ENCODE measurements at regions of chr4 and their contacts with region 1.

Region 1: DNA sequence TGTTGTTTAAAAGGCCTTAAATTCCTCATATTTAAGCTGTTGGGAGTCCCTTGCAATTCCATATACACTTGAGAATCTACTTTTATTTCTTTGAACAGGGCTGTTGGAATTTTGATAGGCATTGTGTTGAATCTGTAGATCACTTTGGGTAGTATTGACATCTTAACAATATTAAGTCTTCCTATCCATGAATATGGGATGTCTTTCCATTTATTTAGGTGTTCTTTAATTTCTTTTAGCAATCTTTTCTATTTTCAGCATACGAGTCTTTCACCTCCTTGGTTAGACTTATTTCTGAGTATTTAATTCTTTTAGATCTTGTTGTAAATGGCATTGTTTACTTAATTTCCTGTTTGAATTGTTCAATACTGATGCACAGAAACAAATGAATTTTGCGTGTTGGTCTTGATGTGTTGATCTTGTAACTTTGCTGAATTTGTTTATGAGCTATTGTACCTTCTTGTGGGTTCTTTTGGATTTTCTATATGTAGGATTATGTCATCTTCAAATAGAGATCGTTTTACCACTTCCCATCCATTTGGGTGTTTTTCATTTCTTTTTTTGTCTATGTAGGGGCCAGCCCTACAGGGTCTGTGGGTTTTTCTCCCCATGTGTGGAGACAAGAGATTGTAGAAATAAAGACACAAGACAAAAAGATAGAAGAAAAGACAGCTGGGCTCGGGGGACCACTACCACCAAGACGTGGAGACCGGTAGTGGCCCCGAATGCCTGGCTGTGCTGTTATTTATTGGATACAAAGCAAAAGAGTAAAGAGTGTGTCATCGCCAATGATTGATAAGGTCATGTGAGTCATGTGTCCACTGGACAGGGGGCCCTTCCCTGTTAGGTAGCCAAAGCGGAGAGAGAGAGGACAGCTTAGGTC is 18.2 kb upstream of the CTBP1 start:
- DNase-seq: no peak
- H3K4me3 Mint-ChIP-seq: peak overlapping the region; percentile 49
- H3K27ac Mint-ChIP-seq: peak overlapping the region; percentile 70
- H3K4me1 Mint-ChIP-seq: peaks cover 13% of the 10 kb centered on the region
- H3K27me3 Mint-ChIP-seq: no peaks in the 10 kb centered on the region

Region 2: DNA sequence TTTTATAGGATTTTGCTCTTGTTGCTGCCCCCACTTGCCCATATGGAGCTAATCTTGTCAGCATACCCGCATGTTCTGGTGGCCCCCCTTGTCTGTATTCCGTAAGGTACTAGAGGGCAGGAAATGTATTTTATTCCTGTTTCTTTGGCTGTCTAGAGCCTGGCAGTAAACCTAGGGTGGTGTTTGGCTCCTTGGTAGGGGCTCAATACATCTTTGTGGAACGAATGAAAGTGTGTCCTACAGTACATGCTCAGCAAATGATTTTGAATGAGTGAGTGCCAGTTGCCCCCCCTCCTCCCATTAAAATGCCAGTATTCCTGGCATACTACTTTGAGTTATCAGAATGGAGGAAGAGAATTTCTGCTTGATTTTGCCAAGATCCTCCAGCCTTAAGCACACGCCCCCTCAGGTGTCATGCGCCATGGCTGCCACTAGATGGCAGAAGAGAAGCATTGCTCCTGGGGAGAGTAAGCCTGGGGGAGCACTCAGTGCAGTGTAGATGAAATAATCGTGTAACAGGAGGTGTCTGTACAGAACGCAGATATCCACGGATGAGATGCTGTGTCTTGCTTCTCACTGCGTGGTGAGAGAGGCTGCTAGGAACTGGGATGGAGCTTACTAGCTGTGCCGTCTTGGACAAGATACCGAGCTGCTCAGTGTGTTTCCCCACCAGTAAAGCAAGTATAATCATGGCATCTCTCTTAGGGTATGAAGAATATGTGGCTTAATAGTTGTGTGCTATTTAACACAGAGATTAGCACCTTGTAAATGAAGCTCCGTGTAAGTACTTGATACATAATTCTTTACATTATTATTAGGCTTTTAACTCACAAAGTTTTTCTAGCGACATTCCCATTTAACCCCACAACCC is 136.6 kb before region 1 on chr4:
- CTCF ChIA-PET with region 1: interaction called, 70 read pairs
- POLR2A ChIA-PET with region 1: no interaction called
- intact Hi-C with region 1: loop called (anchors 1 kb)
- DNase-seq: peak; percentile 81
- H3K4me3 Mint-ChIP-seq: no peak overlapping the region
- H3K27ac Mint-ChIP-seq: no peak overlapping the region
- H3K4me1 Mint-ChIP-seq: no peaks in the 10 kb centered on the region
- H3K27me3 Mint-ChIP-seq: peaks cover 2% of the 10 kb centered on the region

Region 3: GRCh38 chr4:1137063-1137776 is 129.9 kb before region 1 on chr4:
- CTCF ChIA-PET with region 1: interaction called, 70 read pairs
- POLR2A ChIA-PET with region 1: no interaction called
- intact Hi-C with region 1: no loop called
- DNase-seq: no peak
- H3K4me3 Mint-ChIP-seq: peak overlapping the region; percentile 60
- H3K27ac Mint-ChIP-seq: no peak overlapping the region
- H3K4me1 Mint-ChIP-seq: peaks cover 8% of the 10 kb centered on the region
- H3K27me3 Mint-ChIP-seq: no peaks in the 10 kb centered on the region

Region 4: DNA sequence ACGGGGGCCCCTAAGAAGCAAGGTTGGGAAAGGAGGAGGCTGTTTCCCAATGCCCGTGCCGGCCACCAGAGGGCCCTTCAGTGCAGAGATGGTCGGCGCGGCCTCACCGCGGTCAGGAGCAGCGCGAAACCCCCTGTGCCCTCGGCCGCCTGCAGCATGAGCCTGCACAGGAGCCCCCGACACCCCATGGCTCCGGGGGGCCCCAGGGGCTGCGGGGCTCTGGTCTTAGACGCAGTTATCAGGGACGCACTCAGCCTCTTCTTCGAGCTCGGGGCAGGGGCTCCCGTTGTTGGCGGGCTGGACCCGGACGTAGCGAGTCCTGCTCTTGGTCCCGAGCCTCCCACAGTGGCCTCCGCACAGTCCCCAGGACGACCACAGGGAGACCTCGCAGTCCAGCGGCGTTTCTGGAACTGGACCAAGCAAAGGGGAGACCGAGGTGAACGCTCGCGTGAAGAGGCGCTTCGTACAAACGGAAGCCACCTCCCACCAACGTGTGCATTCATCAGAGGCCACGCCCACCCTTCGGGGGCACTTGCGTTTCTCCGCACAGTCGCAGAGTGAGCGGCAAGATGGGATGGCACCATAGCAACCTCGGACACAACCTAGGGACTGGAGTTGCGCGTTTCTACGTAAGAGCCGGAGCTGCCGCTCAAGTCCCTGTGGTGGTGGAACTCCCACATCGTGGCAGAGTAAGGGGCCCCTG is 99.7 kb before region 1 on chr4:
- CTCF ChIA-PET with region 1: interaction called, 62 read pairs
- POLR2A ChIA-PET with region 1: interaction called, 5 read pairs
- intact Hi-C with region 1: loop called (anchors 1 kb)
- DNase-seq: peak; percentile 94
- H3K4me3 Mint-ChIP-seq: peak overlapping the region; percentile 74
- H3K27ac Mint-ChIP-seq: no peak overlapping the region
- H3K4me1 Mint-ChIP-seq: peaks cover 17% of the 10 kb centered on the region
- H3K27me3 Mint-ChIP-seq: peaks cover 12% of the 10 kb centered on the region

Region 5: GRCh38 chr4:1183985-1184773 is 82.9 kb before region 1 on chr4:
- CTCF ChIA-PET with region 1: interaction called, 11 read pairs
- POLR2A ChIA-PET with region 1: no interaction called
- intact Hi-C with region 1: no loop called
- DNase-seq: no peak
- H3K4me3 Mint-ChIP-seq: no peak overlapping the region
- H3K27ac Mint-ChIP-seq: peak overlapping the region; percentile 49
- H3K4me1 Mint-ChIP-seq: peaks cover 13% of the 10 kb centered on the region
- H3K27me3 Mint-ChIP-seq: peaks cover 9% of the 10 kb centered on the region

Region 6: DNA sequence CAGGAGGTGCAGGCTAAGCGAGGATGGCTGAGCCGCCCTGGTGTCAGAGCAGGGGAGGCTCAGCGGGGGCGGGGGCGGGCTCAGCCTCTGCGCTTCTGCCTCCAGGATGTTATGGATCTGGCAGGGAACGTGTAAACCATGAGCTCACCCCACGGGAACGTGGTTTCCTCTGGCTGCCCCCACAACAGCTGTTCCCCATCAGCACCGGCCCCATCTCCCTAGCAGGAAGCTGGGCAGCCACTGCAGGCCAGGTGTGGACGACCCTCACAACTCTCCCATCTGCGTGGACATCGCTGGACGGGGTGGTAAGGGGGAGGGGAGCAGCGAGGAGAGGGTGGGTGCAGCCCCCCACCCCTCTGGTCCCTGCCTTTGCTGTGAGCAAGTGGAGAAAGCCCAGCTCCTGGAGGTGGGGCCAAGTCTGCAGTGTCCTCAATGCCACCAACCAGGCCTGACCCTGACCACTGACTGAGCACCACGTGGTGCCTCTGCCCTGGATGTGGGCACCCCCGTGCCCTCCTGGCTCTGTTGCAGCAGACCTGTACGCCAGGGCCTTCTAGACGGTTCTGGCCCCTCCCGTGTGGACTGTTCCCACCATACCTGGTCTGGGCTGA is 66.6 kb before region 1 on chr4:
- CTCF ChIA-PET with region 1: interaction called, 13 read pairs
- POLR2A ChIA-PET with region 1: interaction called, 4 read pairs
- intact Hi-C with region 1: loop called (anchors 5 kb)
- DNase-seq: peak; percentile 40
- H3K4me3 Mint-ChIP-seq: peak overlapping the region; percentile 67
- H3K27ac Mint-ChIP-seq: peak overlapping the region; percentile 97
- H3K4me1 Mint-ChIP-seq: peaks cover 33% of the 10 kb centered on the region
- H3K27me3 Mint-ChIP-seq: no peaks in the 10 kb centered on the region

Region 7: DNA sequence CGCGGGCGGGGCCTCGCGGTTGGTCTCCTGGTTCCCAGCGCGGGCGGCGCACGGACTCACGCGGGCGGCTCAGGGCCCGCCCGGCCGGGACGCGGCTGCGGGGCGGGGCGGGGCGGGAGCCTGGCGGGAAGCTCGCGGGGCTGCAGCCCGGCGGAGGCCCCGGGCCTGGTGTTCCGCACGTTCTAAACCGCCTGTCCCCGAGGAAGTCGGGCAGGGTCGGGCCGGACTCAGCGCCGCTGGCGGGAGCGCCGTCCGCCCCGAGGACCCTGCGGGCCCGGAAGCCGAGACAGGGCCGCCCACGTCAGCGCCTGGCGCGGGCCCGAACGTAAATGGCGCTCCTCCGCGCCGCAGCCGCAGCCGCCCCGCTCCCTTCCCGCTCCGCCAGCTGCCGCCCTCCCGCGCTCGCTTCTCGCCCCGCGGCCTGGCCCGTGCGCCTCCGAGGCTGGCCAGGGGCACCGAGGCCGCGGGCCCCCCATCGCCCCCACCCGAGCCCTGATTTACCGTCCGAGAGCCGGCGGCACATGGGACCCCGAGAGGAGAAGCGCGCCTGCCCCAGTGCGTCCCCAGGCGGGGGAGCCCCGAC is 17.9 kb before region 1 on chr4:
- CTCF ChIA-PET with region 1: interaction called, 43 read pairs
- POLR2A ChIA-PET with region 1: interaction called, 5 read pairs
- intact Hi-C with region 1: loop called (anchors 1 kb)
- DNase-seq: peak; percentile 85
- H3K4me3 Mint-ChIP-seq: peak overlapping the region; percentile 85
- H3K27ac Mint-ChIP-seq: peak overlapping the region; percentile 96
- H3K4me1 Mint-ChIP-seq: peaks cover 69% of the 10 kb centered on the region
- H3K27me3 Mint-ChIP-seq: no peaks in the 10 kb centered on the region